Ascending aorta (tissue), 2 donors: ENCODE measurements at regions of chr7 and their contacts with region 1.

Region 1: GRCh38 chr7:132250883-132251653 is 325.2 kb downstream of the PLXNA4 start:
- DNase-seq: peak; percentile 38 to 82
- H3K4me3 ChIP-seq: no peak overlapping the region
- H3K27ac ChIP-seq: peak overlapping the region in 1 of 2 donors; percentile 6
- H3K4me1 ChIP-seq: peaks cover 3 to 19% of the 10 kb centered on the region in 2 donors
- H3K27me3 ChIP-seq: no peaks in the 10 kb centered on the region
- CTCF ChIP-seq: no peak

Region 2: DNA sequence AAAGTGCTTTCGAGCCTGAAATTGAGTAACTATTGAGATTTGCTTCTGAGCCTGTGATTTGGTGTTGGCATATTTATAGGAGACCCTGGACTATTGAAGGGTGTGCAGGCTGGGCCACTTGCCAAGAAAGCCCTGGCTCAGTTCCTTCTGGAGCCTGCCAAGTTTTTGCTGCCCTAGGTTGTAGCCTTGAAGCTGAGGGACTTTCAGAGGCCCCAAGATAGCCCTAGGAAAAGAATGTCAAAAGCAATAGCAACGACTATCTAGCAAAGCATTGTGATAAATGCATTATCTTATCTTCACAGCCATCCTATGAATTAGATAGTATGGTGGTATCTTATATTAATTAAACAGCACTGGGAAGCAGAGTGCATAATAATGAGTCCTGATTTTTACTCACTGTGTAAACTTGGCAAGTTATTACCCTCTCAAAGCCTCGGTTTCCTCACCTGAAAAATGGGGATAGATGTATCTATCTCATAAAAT is 220.9 kb before region 1 on chr7:
- intact Hi-C with region 1: no loop called
- DNase-seq: no peak
- H3K4me3 ChIP-seq: no peak overlapping the region
- H3K27ac ChIP-seq: peak overlapping the region; percentile 33 to 34
- H3K4me1 ChIP-seq: peaks cover 2 to 10% of the 10 kb centered on the region in 2 donors
- H3K27me3 ChIP-seq: no peaks in the 10 kb centered on the region
- CTCF ChIP-seq: no peak

Region 3: GRCh38 chr7:132424821-132425724 is 174.0 kb after region 1 on chr7:
- intact Hi-C with region 1: loop called (anchors 5 kb)
- DNase-seq: no peak
- H3K4me3 ChIP-seq: no peak overlapping the region
- H3K27ac ChIP-seq: peak overlapping the region; percentile 32 to 76
- H3K4me1 ChIP-seq: peaks cover 7 to 48% of the 10 kb centered on the region in 2 donors
- H3K27me3 ChIP-seq: no peaks in the 10 kb centered on the region
- CTCF ChIP-seq: no peak